Activated naive CD4-positive, alpha-beta T cell treated with anti-CD3 and anti-CD28 coated beads for 36 hours (primary cell): ENCODE measurements at regions of chr12 and their contacts with region 1.

Region 1: DNA sequence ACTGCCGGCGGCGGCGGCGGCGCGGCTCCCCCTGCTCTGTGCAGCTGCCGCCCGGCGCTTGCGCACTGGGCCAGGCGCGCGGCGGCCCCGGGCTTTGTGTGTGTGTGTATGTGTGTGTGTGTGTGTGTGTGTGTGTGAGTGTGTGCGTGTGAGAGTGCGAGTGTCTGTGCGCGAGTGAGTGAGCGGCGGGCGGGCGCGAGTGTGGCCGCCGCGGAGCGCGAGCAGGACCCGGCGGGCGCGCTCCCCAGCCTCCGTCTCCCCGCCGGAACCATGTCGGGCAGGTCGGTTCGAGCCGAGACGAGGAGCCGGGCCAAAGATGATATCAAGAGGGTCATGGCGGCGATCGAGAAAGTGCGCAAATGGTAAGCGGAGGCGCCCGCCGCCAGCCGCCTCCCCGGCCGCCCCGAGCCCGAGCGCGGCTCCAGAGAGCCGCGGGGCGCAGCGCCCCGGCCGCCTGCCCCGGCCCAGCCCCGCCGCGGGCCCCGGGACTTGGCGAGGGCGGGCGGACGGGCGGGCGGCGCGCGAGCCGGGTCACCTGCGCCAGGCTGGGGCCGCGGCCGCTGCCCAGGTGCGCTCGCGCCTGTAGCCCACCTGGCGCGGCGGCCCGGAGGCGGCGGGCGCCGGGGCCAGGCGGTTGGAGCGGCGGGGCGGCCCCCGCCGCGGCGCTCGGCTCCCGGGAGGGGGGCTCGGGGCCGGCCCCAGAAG is at the start of gene BCL7A:
- DNase-seq: peak; percentile 60
- H3K4me3 Mint-ChIP-seq: peak within 1 kb of the TSS; percentile 87
- H3K27ac Mint-ChIP-seq: no peak within 1 kb of the TSS
- H3K4me1 Mint-ChIP-seq: peaks cover 8% of the 10 kb centered on the region
- H3K27me3 Mint-ChIP-seq: peaks cover 15% of the 10 kb centered on the region
- total RNA-seq, gene BCL7A: 6.1 to 6.2 TPM

Region 2: DNA sequence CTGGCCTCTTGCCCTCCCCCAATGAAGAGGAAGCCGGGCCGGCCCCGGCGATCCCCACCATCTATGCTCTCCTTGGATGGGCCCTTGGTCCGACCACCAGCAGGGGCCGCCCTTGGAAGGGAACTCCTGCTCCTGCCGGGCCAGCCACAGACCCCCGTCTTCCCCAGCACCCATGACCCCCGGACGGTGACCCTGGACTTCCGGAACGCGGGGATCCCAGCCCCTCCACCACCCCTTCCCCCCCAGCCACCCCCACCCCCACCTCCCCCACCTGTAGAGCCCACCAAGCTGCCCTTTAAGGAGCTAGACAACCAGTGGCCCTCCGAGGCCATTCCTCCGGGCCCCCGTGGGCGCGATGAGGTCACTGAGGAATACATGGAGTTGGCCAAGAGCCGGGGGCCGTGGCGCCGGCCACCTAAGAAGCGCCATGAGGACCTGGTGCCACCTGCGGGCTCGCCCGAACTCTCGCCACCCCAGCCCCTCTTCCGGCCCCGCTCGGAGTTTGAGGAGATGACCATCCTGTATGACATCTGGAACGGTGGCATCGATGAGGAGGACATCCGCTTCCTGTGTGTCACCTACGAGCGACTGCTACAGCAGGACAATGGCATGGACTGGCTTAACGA is 198.8 kb before region 1 on chr12:
- CTCF ChIA-PET with region 1: no interaction called
- intact Hi-C with region 1: no loop called
- DNase-seq: no peak
- H3K4me3 Mint-ChIP-seq: no peak overlapping the region
- H3K27ac Mint-ChIP-seq: no peak overlapping the region
- H3K4me1 Mint-ChIP-seq: no peaks in the 10 kb centered on the region
- H3K27me3 Mint-ChIP-seq: no peaks in the 10 kb centered on the region

Region 3: DNA sequence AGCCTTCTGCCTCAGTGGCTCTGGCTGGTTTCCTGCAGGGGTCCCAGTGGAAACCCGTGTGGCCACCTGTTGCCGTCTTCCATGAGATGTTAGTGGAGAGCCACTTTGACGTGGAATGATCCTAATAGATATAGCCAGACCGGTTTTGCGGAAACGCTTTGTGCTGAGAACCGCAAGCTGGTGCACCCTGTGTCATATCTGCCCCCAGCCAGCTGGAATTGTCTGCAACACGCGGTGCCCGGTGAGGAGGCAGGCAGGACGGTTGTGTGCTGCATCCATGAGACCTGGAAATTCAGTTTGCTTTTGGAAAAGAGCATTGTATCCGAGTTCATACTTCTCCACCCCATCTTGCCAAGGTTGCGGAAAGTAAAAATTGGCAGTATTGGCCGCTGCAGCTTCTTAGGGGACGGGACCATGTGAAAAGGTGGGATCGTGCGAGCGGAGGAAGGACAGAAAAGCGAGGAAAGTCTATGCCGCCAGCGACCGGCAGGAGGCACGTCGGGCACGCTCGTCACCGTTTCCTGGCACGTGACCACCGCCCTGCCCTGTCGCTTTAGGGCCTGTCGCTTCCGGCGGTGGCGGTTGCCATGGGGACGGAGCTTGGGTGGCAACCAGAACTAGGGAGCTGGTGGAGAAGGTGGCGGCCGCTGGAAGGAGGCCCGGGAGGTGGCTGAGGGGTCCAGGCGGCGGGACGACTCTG is 103.8 kb before region 1 on chr12 and contains the start of gene CFAP251:
- CTCF ChIA-PET with region 1: interaction called, 3 read pairs
- intact Hi-C with region 1: loop called (anchors 2 kb)
- DNase-seq: peak; percentile 98
- H3K4me3 Mint-ChIP-seq: peak within 1 kb of the TSS; percentile 69
- H3K27ac Mint-ChIP-seq: peak within 1 kb of the TSS; percentile 78
- H3K4me1 Mint-ChIP-seq: peaks cover 16% of the 10 kb centered on the region
- H3K27me3 Mint-ChIP-seq: no peaks in the 10 kb centered on the region
- total RNA-seq, gene CFAP251: 0.20 to 0.62 TPM

Region 4: DNA sequence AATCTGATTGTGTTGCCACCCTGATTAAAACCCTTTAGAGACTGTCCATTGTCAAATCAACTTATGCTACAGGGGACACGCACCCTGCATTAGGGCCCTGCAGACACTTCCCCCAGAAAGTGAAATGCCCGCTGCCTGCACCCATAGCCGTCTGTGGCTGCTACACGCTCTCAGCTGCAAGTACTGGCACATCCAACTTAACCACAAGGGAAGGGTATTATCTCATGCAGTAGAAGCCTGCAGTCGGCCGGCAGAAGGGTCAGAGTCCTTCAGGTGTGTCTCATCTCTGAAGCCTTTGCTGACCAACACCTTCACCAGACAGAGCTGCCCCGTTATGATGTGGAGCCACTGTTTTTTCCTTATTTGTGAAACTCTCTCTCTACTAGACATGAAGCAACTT is 82.8 kb before region 1 on chr12:
- CTCF ChIA-PET with region 1: no interaction called
- intact Hi-C with region 1: loop called (anchors 5 kb)
- DNase-seq: no peak
- H3K4me3 Mint-ChIP-seq: no peak overlapping the region
- H3K27ac Mint-ChIP-seq: no peak overlapping the region
- H3K4me1 Mint-ChIP-seq: peaks cover 5% of the 10 kb centered on the region
- H3K27me3 Mint-ChIP-seq: no peaks in the 10 kb centered on the region

Region 5: DNA sequence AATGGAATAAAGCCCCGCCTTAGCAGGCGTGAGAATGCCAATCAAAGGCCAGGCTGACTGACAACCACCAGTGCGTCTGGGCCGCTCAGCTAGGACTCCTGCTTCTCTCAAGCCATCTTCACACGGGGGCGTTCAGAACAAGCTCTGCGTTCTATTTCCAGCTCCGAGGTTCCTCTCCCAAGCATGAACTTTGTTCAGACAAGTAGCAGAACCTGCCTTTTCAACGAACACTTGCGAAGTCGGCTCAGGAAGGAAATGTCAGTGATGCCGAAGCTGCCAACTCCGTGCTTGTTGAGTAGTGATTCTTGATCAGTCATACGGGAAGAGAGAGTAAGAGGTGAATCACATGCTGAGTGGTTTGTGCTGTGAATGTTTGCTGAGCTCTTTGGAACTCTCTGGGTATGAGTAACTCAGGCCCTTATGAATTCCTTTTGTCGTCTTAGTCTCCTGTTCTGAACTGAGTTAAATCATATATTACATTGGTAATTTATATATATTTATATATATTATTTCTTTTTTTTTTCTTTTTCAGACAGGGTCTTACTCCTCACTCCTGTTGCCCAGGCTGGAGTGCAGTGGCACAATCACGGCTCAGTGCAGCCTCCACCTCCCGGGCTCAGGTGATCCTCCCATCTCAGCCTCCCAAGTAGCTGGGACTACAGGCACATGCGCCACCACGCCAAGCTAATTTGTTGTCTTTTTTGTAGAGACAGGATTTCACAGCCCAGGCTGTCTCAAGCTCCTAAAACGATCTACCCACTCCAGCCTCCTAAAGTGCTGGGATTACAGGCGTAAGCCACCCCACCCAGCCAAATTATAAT is 29.7 kb before region 1 on chr12:
- CTCF ChIA-PET with region 1: interaction called, 3 read pairs
- intact Hi-C with region 1: loop called (anchors 1 kb)
- DNase-seq: peak; percentile 89
- H3K4me3 Mint-ChIP-seq: peak overlapping the region; percentile 43
- H3K27ac Mint-ChIP-seq: peak overlapping the region; percentile 87
- H3K4me1 Mint-ChIP-seq: peaks cover 20% of the 10 kb centered on the region
- H3K27me3 Mint-ChIP-seq: no peaks in the 10 kb centered on the region

Region 6: GRCh38 chr12:122064025-122064777 is 42.2 kb after region 1 on chr12:
- CTCF ChIA-PET with region 1: no interaction called
- intact Hi-C with region 1: no loop called
- DNase-seq: peak; percentile 61
- H3K4me3 Mint-ChIP-seq: peak overlapping the region; percentile 14
- H3K27ac Mint-ChIP-seq: no peak overlapping the region
- H3K4me1 Mint-ChIP-seq: peaks cover 19% of the 10 kb centered on the region
- H3K27me3 Mint-ChIP-seq: no peaks in the 10 kb centered on the region